Aorta (tissue), 5 donors: ENCODE measurements at regions of chr7 and their contacts with region 1.

Region 1: DNA sequence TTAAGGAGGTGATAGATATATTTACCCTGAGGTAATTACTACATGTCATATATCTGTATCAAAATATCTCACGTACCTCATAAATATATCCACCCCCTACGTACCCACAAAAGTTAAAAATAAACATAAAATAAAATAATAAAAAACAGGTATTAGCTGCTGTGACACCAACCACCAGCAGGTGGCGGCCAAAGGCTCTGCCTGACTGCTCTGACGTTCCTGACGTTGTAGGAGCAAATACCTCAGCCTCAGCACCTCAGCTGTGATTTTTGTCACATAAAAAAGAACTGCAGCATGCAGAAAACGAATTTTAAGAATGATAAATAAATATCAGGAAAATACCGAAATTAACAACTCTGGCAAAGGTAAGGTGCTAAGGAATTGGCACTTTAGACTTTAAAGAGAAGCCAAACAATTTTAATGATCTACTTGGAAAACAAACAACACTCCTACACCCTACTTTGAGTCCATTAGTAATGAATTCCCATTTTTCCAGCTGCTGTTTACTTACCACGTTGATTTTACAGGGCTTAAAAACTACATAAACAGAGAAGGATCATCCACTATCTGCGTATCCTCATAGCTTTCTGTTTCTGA is 125.4 kb upstream of the TARP start:
- DNase-seq: peak; percentile 52 to 81
- ATAC-seq: peak; percentile 78
- H3K4me3 ChIP-seq: no peak overlapping the region
- H3K27ac ChIP-seq: no peak overlapping the region
- H3K4me1 ChIP-seq: no peaks in the 10 kb centered on the region
- H3K27me3 ChIP-seq: no peaks in the 10 kb centered on the region

Region 2: DNA sequence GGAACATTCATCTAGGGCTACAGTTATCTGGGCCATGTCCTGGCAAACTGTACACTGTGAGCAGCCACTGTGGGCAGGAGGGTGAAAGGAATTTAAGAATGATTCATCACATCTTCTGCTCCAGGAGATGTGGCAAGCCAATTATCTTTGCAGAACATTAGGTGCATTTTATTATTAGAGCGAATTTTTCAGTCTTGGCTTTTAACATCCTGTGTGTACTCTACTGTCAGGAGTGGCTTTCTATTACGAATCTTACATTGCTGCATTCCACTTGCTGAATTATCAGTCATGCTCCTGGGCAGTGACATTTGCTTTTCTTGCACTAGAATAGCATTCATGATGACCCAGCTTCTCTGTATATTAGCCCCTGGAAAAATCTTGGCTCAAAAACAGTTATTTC is 16.1 kb before region 1 on chr7:
- intact Hi-C with region 1: loop called in 1 of 2 experiments (anchors 1 kb)
- DNase-seq: no peak
- ATAC-seq: no peak
- H3K4me3 ChIP-seq: no peak overlapping the region
- H3K27ac ChIP-seq: no peak overlapping the region
- H3K4me1 ChIP-seq: no peaks in the 10 kb centered on the region
- H3K27me3 ChIP-seq: no peaks in the 10 kb centered on the region